ENCODE measurements at regions of chr11 and their contacts with region 1.

Region 1: GRCh38 chr11:114262681-114263512 is 33.3 kb upstream of the NNMT start:
- DNase-seq: peak in 4 of 10 donors; percentile 60 to 67 (median 62)
- H3K4me3 ChIP-seq: no peak overlapping the region
- H3K27ac ChIP-seq: peak overlapping the region in 1 of 59 donors; percentile 1
- H3K27me3 ChIP-seq: no peaks in the 10 kb centered on the region
- CTCF ChIP-seq: peak; percentile 44 to 89 (median 72)

Region 2: DNA sequence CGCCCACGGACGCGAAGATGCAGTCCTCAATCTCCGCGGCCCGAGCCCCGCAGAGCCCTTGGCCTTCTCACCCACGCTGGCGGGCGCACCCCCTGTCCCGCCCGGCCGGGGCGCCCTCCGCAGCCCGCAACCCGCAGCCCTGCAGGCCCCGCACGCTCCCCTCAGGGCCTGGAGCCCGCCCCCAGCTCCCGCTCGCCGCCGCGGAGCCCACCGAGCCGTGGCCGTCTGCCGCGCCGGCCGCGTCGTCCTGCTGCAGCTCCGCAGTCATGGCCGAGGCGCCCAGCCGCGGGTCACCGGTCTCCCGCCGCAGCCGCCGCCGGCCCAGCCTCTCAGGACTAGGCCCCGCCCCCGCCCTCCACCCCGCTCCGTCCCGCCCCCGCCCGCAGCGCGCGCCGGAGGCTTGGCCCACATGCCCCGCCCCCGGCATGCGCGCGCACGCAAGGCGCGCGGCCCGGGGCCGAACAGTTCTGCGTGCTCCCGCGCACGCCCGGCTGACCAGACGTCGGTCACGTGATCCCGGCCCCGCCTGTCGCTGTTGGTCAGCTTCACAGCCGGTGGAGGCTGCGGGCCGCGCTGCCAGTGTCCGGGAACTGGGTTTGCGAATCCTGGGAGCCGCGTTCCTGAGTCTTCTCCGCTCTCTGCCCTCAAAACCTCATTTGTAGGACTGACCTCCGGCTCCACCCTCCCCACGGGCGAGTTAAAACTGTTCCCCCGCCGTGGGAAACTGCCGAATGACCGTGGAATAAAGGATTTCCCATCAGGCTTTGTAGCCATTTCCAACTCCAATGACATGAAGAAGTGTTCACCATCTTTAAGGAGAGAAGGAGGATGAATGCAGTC is 387.4 kb before region 1 on chr11 and contains the start of gene USP28:
- intact Hi-C with region 1: loop called (anchors 5 kb)
- DNase-seq: peak; percentile 96 to 99 (median 98)
- H3K4me3 ChIP-seq: peak within 1 kb of the TSS; percentile 43 to 97 (median 84)
- H3K27ac ChIP-seq: peak within 1 kb of the TSS; percentile 86 to 100 (median 96)
- H3K27me3 ChIP-seq: no peaks in the 10 kb centered on the region
- CTCF ChIP-seq: peak in 22 of 56 donors; percentile 3 to 44 (median 16)
- total RNA-seq, gene USP28: 20.2 to 57.1 (median 38.9) TPM

Region 3: DNA sequence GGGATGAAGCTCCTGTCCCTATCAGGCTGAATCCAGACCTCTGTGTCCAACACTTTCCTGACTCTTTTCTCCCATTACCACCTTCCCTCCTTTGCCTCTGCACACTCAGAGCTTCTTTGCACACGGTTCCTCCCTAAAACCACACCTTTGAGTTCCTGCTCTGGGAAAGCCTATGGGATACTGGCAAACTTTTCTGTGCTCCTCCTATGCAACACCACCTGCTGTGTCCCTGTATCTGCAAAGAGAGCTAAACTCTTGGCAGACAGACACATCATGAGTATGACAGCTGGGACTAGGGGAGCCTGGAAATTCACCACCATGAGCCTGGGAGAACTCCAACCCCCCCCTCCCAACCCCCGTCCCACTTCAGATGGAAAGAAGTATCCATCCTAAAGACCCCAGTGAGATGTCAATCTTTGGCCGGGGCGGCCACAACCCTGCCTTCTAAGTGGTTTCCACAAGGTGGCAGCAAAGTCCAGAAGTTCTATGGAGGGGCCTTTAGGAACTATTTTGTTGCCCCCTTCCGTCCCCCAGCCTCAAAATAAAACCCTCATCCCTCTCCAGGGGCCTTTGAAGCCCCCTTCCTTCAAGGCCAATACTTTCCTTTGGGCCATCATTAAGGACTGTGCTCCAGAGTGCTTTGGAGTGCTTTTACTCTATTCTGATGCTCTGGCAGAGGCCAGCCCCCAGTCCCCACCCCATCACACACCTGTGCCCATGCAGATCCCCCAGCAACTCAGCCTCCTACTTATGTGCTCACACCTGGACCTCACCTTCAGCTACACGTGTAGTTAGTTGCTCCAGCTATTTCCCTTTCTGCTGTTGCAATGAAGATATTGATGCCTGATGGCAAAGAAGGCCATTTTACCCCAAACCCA is 268.6 kb before region 1 on chr11:
- intact Hi-C with region 1: loop called (anchors 2 kb)
- DNase-seq: peak in 1 of 10 donors; percentile 32
- H3K4me3 ChIP-seq: no peak overlapping the region
- H3K27ac ChIP-seq: no peak overlapping the region
- H3K27me3 ChIP-seq: peaks cover 0 to 10% (median 0%) of the 10 kb centered on the region in 45 donors
- CTCF ChIP-seq: peak; percentile 24 to 83 (median 72)

Region 4: DNA sequence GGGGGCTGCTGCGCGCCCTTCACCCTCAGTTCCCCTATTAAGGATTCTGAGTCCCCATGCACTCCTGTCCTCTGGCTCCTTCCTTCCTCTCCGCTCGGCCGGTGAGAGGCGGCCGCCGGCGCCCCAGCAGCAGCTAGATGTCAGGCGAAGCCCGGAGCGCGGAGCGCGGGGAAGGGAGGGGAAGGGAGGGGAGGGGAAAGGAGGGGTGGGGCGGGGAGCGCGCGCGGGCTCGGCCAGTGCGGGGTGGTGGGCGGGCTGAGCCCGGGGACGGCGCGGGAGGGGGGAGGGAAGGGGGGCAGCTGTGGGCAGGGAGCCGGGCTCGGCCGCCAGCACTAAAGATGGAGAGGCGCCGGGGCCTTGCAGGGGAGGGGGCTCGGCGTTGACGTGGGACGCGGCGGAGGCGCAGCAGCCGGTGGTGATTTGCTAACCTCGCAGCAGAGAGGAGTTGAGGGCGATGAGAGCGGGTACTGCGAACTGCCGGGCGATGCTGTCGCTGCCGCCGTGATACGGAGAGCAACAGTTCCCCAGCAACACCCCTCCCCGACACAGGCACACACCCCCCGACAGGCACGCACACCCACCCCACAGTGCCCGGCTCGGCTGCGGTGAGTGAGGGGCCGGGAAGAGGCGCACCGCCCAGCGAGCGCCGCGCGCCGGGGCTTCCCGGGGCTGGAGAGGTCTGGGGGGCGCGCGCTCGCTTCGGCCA is 203.5 kb before region 1 on chr11 and contains the start of gene ZBTB16:
- intact Hi-C with region 1: loop called (anchors 1 kb)
- DNase-seq: peak; percentile 79 to 94 (median 90)
- H3K4me3 ChIP-seq: peak within 1 kb of the TSS; percentile 68 to 99 (median 93)
- H3K27ac ChIP-seq: peak within 1 kb of the TSS; percentile 84 to 99 (median 98)
- H3K27me3 ChIP-seq: no peaks in the 10 kb centered on the region
- CTCF ChIP-seq: peak in 53 of 56 donors; percentile 28 to 82 (median 55)
- total RNA-seq, gene ZBTB16: 78.3 to 259 (median 179) TPM

Region 5: DNA sequence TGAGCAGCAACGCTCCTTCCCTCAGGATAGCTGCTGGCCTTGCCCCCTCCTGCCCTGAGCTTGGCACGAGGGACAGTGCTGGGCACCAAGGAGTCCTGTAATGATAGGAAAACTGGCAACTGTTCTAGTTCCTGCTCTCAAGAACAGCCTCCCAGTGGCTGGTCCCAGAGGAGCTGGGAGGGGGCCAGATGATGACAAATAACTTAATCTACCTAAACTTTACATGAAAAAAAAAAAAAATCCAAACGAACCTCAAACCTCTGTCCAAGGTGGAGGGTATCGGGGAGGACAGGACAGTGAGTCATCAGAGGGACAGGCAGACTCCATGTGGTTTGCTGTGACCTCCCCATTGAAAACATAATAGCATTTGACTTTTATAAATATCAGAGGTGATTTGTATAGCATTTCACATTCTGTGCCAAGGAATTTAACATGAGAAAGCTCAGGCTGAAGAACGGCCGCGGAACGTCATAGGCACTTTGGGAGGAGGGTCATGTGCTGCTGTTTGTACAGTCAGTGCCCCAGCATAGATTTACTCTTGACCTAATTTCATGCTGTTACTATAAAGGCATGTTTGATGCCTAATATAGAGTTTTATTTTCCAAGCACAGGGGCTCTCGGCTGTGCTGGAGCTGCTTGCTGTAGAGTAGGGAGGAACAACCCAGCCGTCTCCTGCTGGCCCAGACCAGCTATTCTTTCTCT is 64.9 kb before region 1 on chr11:
- intact Hi-C with region 1: loop called in 1 of 2 experiments (anchors 5 kb)
- DNase-seq: peak in 1 of 10 donors; percentile 50
- H3K4me3 ChIP-seq: peak overlapping the region in 17 of 59 donors; percentile 0 to 34 (median 13)
- H3K27ac ChIP-seq: peak overlapping the region; percentile 1 to 91 (median 74)
- H3K27me3 ChIP-seq: no peaks in the 10 kb centered on the region
- CTCF ChIP-seq: peak in 2 of 56 donors; percentile 6 to 12